Left colon (tissue), 2 donors: ENCODE measurements at regions of chr20 and their contacts with region 1.

Region 1: GRCh38 chr20:25389853-25390537 is 640 bp downstream of the ABHD12 start:
- DNase-seq: peak in 1 of 2 donors; percentile 66
- ATAC-seq: peak; percentile 52

Region 2: GRCh38 chr20:25310268-25310920 is 79.6 kb before region 1 on chr20:
- intact Hi-C with region 1: loop called in 1 of 2 experiments (anchors 10 kb)
- DNase-seq: peak; percentile 62 to 81
- ATAC-seq: peak; percentile 80

Region 3: GRCh38 chr20:25470045-25470444 is 80.0 kb after region 1 on chr20:
- intact Hi-C with region 1: no loop called
- DNase-seq: peak in 1 of 2 donors; percentile 43
- ATAC-seq: peak; percentile 86

Region 4: DNA sequence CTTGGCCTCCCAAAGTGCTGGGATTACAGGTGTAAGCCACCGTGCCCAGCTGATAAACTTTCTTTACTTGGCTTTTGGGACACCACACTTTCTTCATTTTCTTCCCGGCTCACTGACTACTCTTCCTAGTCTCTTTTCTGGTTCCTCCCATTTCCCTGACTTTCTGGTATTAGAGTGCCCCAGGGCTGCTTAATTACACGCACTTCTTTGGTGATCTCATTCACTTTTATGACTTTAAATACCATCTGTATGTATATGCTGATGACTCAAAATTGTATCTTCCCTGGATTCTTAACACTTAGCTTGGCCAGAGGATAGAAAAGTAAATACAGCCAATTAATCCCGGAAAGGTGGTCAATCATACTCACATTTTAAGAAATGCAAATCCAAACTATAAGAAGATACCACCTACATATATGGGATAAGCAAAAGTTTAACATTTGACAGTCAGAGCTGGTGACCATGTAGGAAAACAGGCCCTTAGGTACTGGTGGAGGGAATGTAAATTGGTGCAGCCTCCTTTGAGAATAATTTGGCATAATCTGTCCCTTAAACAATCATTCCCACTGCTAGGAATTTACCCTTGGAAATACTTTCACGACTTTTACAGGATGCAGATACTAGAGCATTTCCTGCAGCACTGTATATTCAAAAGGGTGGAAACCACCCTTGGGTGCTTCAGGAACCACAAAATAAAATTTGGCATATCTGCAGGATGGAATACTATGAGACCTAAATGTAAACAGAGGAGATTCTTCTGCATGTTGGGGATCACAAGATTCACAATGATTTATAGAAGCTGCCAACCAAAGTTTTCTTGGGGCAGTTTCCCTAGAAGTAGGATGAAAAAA is 243.2 kb after region 1 on chr20:
- intact Hi-C with region 1: no loop called
- DNase-seq: no peak
- ATAC-seq: no peak